IMR-90 (cell line): ENCODE measurements at regions of chr10 and their contacts with region 1.

Region 1: GRCh38 chr10:91298224-91298871 is 77.9 kb downstream of the PCGF5 start:
- DNase-seq: peak; percentile 81
- ATAC-seq: peak; percentile 91
- H3K4me3 ChIP-seq: peak overlapping the region; percentile 38
- H3K27ac ChIP-seq: peak overlapping the region; percentile 44
- H3K4me1 ChIP-seq: peaks cover 7% of the 10 kb centered on the region
- H3K27me3 ChIP-seq: no peaks in the 10 kb centered on the region
- CTCF ChIP-seq: peak; percentile 97
- POLR2A ChIP-seq: 0 out of 2 replicates have a peak, but pooled peaks have one; percentile 53
- RAD21 ChIP-seq: peak; percentile 97

Region 2: GRCh38 chr10:90276894-90277475 is 1021.4 kb before region 1 on chr10:
- CTCF ChIA-PET with region 1: no interaction called
- POLR2A ChIA-PET with region 1: no interaction called
- dilution Hi-C with region 1: no loop called
- in situ Hi-C with region 1: no loop called
- intact Hi-C with region 1: no loop called
- DNase-seq: no peak
- ATAC-seq: no peak
- H3K4me3 ChIP-seq: no peak overlapping the region
- H3K27ac ChIP-seq: no peak overlapping the region
- H3K4me1 ChIP-seq: no peaks in the 10 kb centered on the region
- H3K27me3 ChIP-seq: peaks cover 3% of the 10 kb centered on the region
- CTCF ChIP-seq: no peak
- POLR2A ChIP-seq: no peak
- RAD21 ChIP-seq: no peak

Region 3: DNA sequence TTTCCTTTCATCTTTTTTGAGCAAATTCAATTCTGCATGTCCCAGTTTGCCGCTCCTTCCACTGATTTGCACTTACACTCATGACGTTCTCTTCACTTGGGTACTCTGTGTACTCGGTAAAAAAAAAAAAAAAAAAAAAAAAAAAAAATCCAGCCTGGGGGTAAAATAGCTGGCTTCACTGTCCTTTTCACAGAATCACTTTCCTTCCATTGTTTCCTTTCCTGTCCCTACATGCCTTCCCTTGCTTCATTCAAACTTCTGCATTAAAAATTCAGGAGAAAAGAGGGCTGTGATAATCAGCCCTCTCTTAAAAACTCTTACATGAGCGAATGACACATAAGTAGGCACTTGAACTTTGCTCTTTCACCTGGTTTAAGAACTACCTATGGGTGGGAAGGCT is 386.2 kb before region 1 on chr10:
- CTCF ChIA-PET with region 1: no interaction called
- POLR2A ChIA-PET with region 1: no interaction called
- dilution Hi-C with region 1: no loop called
- in situ Hi-C with region 1: no loop called
- intact Hi-C with region 1: loop called (anchors 1 kb)
- DNase-seq: no peak
- ATAC-seq: no peak
- H3K4me3 ChIP-seq: no peak overlapping the region
- H3K27ac ChIP-seq: no peak overlapping the region
- H3K4me1 ChIP-seq: peaks cover 1% of the 10 kb centered on the region
- H3K27me3 ChIP-seq: no peaks in the 10 kb centered on the region
- CTCF ChIP-seq: no peak
- POLR2A ChIP-seq: no peak
- RAD21 ChIP-seq: no peak

Region 4: DNA sequence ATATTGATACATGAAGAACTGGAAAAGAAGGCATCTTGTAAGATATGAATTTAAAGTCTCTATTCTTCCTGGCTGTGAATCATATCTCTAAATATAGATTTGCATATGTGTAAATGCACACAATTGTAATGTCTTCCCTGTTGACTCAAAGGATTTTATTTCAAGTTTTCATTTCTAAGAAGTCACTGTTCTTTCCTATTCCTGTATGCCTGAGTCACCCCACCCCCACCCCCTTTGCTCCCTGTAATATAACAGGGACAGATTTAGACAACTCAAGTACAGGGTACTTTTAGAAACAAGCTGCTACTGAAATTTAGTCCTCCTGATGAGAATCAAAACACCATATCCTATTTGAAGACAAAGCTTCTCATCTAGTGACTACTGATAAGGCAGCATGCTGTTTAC is 68.8 kb after region 1 on chr10:
- CTCF ChIA-PET with region 1: interaction called, 16 read pairs
- POLR2A ChIA-PET with region 1: interaction called, 4 read pairs
- dilution Hi-C with region 1: no loop called
- in situ Hi-C with region 1: no loop called
- intact Hi-C with region 1: loop called (anchors 1 kb)
- DNase-seq: peak; percentile 31
- ATAC-seq: no peak
- H3K4me3 ChIP-seq: no peak overlapping the region
- H3K27ac ChIP-seq: no peak overlapping the region
- H3K4me1 ChIP-seq: no peaks in the 10 kb centered on the region
- H3K27me3 ChIP-seq: no peaks in the 10 kb centered on the region
- CTCF ChIP-seq: no peak
- POLR2A ChIP-seq: no peak
- RAD21 ChIP-seq: no peak

Region 5: DNA sequence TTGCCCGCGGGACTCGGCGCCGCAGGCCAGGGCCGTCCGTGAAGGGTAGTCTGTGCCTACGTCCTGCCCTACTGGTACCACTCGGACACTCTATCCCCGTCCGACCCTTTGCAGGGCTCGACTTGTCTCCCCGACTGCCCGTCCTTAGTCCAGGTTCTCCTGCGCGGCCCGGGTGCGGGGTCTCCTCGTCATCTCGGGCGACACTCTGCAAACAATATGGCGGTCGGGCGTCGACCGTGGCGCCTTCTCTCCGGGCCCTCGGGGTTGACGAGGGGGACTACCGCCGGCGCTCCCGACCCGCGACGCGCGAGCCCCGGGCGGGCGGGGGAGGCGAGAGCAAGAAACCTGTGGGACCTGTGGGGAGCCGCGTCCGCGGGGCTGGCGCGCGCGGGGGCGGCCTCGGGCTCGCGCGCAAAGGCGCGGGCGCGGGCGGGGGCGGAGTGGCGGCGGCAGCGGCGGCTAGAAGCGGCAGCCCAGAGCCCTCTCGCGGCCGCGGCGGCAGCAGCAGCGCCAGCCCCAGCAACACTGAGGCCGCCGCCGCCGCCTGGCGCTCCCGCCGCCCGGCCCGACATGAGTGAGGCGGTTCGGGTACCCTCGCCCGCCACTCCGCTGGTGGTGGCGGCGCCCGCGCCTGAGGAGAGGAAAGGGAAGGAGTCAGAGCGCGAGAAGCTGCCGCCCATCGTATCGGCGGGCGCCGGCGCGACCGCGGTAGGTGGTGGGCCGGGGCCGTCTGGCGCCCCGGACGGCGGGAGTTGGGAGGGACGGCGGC is 111.7 kb after region 1 on chr10 and contains the start of gene HECTD2:
- CTCF ChIA-PET with region 1: interaction called, 4 read pairs
- POLR2A ChIA-PET with region 1: no interaction called
- dilution Hi-C with region 1: no loop called
- in situ Hi-C with region 1: no loop called
- intact Hi-C with region 1: loop called (anchors 1 kb)
- DNase-seq: peak; percentile 65
- ATAC-seq: peak; percentile 80
- H3K4me3 ChIP-seq: peak within 1 kb of the TSS; percentile 83
- H3K27ac ChIP-seq: peak within 1 kb of the TSS; percentile 98
- H3K4me1 ChIP-seq: no peaks in the 10 kb centered on the region
- H3K27me3 ChIP-seq: no peaks in the 10 kb centered on the region
- CTCF ChIP-seq: peak; percentile 57
- POLR2A ChIP-seq: peak; percentile 64; the same call in 1 of the 2 replicates
- RAD21 ChIP-seq: peak; percentile 27
- total RNA-seq, gene HECTD2: 5.9 and 10.3 TPM in 2 replicates

Region 6: DNA sequence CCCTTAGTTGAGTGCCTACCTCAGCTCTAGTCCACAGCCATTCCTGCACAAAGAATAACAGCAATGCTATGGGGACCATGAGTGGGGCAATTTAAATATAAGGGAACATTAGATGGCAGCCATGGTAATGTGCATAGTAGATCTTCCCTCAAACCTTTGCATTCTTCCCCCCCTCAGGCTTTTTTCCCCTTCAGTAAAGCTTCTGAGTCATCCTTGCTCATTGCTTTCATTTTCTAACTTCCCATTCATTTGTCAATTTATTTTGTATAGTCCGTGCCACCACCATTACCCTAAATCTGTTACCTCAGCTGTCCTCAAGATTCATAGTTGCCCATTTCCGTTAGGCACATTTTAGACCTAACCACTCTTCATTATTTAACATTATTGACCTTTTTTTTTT is 122.5 kb after region 1 on chr10:
- CTCF ChIA-PET with region 1: no interaction called
- POLR2A ChIA-PET with region 1: no interaction called
- dilution Hi-C with region 1: no loop called
- in situ Hi-C with region 1: no loop called
- intact Hi-C with region 1: no loop called
- DNase-seq: peak; percentile 62
- ATAC-seq: peak; percentile 69
- H3K4me3 ChIP-seq: no peak overlapping the region; the same call in 1 of the 2 replicates
- H3K27ac ChIP-seq: no peak overlapping the region
- H3K4me1 ChIP-seq: no peaks in the 10 kb centered on the region
- H3K27me3 ChIP-seq: no peaks in the 10 kb centered on the region
- CTCF ChIP-seq: no peak
- POLR2A ChIP-seq: no peak
- RAD21 ChIP-seq: no peak

Region 7: DNA sequence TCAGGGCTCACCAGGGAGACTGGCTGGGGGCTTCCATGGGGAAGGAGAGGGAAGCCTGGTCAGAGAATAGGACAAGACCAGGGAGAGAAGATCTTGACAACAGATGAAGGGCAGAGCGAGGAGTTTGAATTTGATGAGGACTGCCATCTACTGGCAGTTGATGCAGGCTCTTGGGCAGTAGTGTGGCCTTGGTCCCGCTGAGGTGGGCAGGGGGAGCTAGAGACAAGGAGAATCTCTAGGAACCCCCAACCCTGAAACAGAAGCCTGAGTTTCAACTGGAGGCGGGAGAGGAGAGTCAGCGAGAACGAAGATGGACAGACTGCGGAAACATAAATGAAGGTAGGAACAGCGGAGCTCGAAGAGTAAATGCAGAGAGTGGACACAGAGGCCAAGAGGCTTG is 253.5 kb after region 1 on chr10:
- CTCF ChIA-PET with region 1: interaction called, 5 read pairs
- POLR2A ChIA-PET with region 1: no interaction called
- dilution Hi-C with region 1: no loop called
- in situ Hi-C with region 1: loop called (anchors 5 kb)
- intact Hi-C with region 1: loop called (anchors 1 kb)
- DNase-seq: peak; percentile 80
- ATAC-seq: peak; percentile 93
- H3K4me3 ChIP-seq: no peak overlapping the region
- H3K27ac ChIP-seq: no peak overlapping the region
- H3K4me1 ChIP-seq: no peaks in the 10 kb centered on the region
- H3K27me3 ChIP-seq: no peaks in the 10 kb centered on the region
- CTCF ChIP-seq: peak; percentile 98
- POLR2A ChIP-seq: no peak
- RAD21 ChIP-seq: peak; percentile 83

Region 8: GRCh38 chr10:91820144-91820543 is 521.8 kb after region 1 on chr10:
- CTCF ChIA-PET with region 1: no interaction called
- POLR2A ChIA-PET with region 1: no interaction called
- dilution Hi-C with region 1: no loop called
- in situ Hi-C with region 1: no loop called
- intact Hi-C with region 1: loop called (anchors 10 kb)
- DNase-seq: peak; percentile 54
- ATAC-seq: no peak
- H3K4me3 ChIP-seq: no peak overlapping the region
- H3K27ac ChIP-seq: no peak overlapping the region
- H3K4me1 ChIP-seq: no peaks in the 10 kb centered on the region
- H3K27me3 ChIP-seq: no peaks in the 10 kb centered on the region
- CTCF ChIP-seq: no peak
- POLR2A ChIP-seq: no peak
- RAD21 ChIP-seq: no peak